ENCODE measurements at regions of chr14 and their contacts with region 1.

Region 1: GRCh38 chr14:67370830-67371229 is 10.7 kb downstream of the EIF2S1 start:
- DNase-seq: no peak
- ATAC-seq: peak; percentile 21
- H3K4me3 Mint-ChIP-seq: no peak overlapping the region
- H3K27ac Mint-ChIP-seq: peak overlapping the region; percentile 27
- H3K4me1 Mint-ChIP-seq: peaks cover 49% of the 10 kb centered on the region
- H3K27me3 Mint-ChIP-seq: no peaks in the 10 kb centered on the region
- CTCF ChIP-seq: no peak

Region 2: GRCh38 chr14:67359775-67360648 is 10.8 kb before region 1 on chr14 and contains the starts of genes ATP6V1D and EIF2S1:
- CTCF ChIA-PET with region 1: interaction called, 5 read pairs
- POLR2A ChIA-PET with region 1: interaction called, 14 read pairs
- intact Hi-C with region 1: no loop called
- DNase-seq: peak; percentile 99
- ATAC-seq: peak; percentile 96
- H3K4me3 Mint-ChIP-seq: peak within 1 kb of the TSS; percentile 97
- H3K27ac Mint-ChIP-seq: peak within 1 kb of the TSS; percentile 93
- H3K4me1 Mint-ChIP-seq: peaks cover 60% of the 10 kb centered on the region
- H3K27me3 Mint-ChIP-seq: no peaks in the 10 kb centered on the region
- CTCF ChIP-seq: peak; percentile 99
- total RNA-seq, gene ATP6V1D: 18.8 to 20.7 TPM
- total RNA-seq, gene EIF2S1: 210 to 219 TPM